B cell (primary cell): ENCODE measurements at regions of chr14 and their contacts with region 1.

Region 1: DNA sequence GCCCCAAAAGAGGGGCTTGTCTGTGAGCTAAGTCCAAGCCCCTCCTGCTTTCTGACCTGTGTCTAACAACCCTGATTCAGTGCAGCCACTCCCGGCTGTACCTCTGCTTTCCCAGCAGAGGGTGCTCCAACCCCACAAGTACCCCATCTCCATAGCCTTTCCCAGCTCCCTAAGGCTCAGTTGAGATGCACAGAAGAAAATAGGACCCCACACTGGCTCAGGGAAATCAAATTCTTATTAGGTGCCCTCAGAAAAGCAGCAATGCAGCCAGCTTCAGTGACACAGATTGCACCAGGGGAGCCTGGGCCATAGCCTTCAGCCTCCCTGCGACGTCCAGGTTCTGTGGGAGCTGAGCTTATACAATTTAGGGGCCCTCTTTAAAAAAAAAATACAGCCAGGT is 49.9 kb downstream of the LRRC74A start:
- DNase-seq: peak; percentile 68
- ATAC-seq: peak; percentile 55
- H3K4me3 ChIP-seq: no peak overlapping the region
- H3K4me3 Mint-ChIP-seq: no peak overlapping the region
- H3K27ac ChIP-seq: no peak overlapping the region
- H3K27ac Mint-ChIP-seq: no peak overlapping the region
- H3K4me1 ChIP-seq: no peaks in the 10 kb centered on the region
- H3K4me1 Mint-ChIP-seq: no peaks in the 10 kb centered on the region
- H3K27me3 ChIP-seq: peaks cover 0 to 3% (median 0%) of the 10 kb centered on the region in 4 experiments
- H3K27me3 Mint-ChIP-seq: peaks cover 4% of the 10 kb centered on the region
- CTCF ChIP-seq: peak; percentile 74

Region 2: DNA sequence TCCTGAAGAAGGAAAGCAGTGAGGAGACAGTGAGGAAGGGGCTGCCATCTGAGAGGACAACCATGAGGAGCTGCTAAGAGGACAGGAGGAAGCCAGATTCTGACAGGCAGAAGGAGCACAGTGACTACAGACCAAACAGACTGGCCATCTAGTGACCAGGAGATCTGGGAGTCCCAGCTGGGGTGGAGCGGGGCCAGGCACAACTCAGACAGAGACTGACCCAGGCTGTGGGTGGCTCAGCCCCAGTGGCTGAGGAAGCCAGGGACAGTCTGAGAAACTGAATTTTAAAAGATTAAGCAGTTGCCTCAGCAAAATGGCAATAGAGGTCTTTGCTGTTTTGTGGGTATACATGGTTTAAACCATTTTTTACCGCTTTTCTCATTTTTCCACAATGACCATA is 21.0 kb before region 1 on chr14:
- CTCF ChIA-PET with region 1: no interaction called
- POLR2A ChIA-PET with region 1: no interaction called
- intact Hi-C with region 1: no loop called
- DNase-seq: no peak
- ATAC-seq: no peak
- H3K4me3 ChIP-seq: no peak overlapping the region
- H3K4me3 Mint-ChIP-seq: no peak overlapping the region
- H3K27ac ChIP-seq: no peak overlapping the region
- H3K27ac Mint-ChIP-seq: no peak overlapping the region
- H3K4me1 ChIP-seq: no peaks in the 10 kb centered on the region
- H3K4me1 Mint-ChIP-seq: no peaks in the 10 kb centered on the region
- H3K27me3 ChIP-seq: peaks cover 0 to 4% (median 0%) of the 10 kb centered on the region in 4 experiments
- H3K27me3 Mint-ChIP-seq: peaks cover 26% of the 10 kb centered on the region
- CTCF ChIP-seq: no peak

Region 3: DNA sequence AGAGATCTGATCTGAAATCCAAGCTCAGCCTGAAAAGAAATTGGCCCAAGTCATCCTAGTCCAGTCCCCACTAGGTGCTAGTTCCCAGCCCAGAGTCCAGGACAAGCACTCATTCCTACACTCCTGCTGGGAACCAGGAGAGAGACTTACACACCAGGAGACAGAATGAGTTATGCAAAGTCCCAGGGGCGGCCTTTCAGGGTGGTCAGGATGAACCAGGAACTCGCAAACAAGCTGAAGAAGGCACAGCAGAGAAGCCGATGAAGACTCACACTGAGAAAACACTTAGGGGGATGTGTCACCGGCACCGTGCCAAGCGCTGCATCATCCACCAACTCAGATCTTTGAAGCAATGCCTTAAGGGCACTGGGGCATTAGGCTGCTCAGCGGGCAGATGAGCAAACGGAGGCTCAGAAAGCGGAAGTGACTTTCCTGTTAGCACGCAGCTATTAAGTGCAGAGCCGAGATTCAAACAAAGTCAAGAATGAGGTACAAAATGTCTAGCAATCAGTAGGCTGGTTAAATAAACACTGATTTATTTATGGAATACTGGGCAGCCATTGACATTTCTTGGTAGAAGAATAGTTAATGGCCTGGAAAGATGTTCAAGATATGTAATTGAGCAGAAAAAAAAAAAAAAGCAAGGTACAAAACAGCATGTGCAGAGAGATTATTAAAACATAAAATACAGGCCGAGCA is 28.8 kb after region 1 on chr14:
- CTCF ChIA-PET with region 1: interaction called, 153 read pairs
- POLR2A ChIA-PET with region 1: interaction called, 4 read pairs
- intact Hi-C with region 1: loop called (anchors 2 kb)
- DNase-seq: peak; percentile 91
- ATAC-seq: peak; percentile 83
- H3K4me3 ChIP-seq: peak overlapping the region in 1 of 5 experiments; percentile 36
- H3K4me3 Mint-ChIP-seq: peak overlapping the region; percentile 55
- H3K27ac ChIP-seq: peak overlapping the region; percentile 57 to 76
- H3K27ac Mint-ChIP-seq: peak overlapping the region; percentile 89
- H3K4me1 ChIP-seq: peaks cover 29 to 45% of the 10 kb centered on the region in 2 donors
- H3K4me1 Mint-ChIP-seq: peaks cover 34% of the 10 kb centered on the region
- H3K27me3 ChIP-seq: peaks cover 0 to 6% (median 0%) of the 10 kb centered on the region in 4 experiments
- H3K27me3 Mint-ChIP-seq: no peaks in the 10 kb centered on the region
- CTCF ChIP-seq: no peak

Region 4: DNA sequence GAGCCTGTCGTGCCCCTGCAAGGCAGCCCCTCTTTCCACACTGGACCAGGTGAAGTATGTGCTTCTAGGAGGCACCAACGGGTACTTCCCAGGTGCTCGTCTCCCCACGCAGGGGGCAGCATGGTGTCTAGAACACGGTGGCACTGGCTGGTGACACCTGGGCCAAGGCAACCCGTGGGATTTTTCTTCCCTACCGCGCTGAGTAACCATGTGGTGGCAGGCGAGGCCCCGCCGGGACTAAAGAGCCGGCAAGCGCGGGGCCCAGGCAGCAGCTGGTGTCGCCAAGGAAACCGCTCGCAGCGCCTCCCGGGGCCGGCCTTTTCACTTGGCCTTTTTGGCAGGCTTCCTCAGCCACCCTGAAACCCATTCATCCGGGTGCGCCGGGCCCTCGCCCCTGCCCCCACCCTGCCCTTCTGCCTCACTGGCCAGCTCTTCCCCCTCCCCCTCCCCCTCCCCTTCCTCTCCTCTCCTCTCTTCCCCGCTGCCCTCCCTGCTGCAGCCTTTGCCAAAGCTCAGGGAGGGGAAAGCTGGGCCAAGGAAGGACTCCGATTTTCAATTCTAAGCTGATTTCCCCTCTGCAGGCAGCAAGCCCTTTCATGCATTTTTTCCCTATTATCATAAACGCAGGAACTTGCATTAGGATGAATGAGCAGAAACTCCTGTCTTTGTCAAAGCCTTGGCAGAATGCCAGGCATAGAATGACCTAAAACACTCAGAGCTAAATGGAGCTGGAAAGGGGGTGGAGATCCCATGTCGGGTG is 71.2 kb after region 1 on chr14:
- CTCF ChIA-PET with region 1: interaction called, 6 read pairs
- POLR2A ChIA-PET with region 1: no interaction called
- intact Hi-C with region 1: loop called (anchors 2 kb)
- DNase-seq: peak; percentile 90
- ATAC-seq: peak; percentile 95
- H3K4me3 ChIP-seq: peak overlapping the region in 1 of 5 experiments; percentile 24
- H3K4me3 Mint-ChIP-seq: peak overlapping the region; percentile 64
- H3K27ac ChIP-seq: no peak overlapping the region
- H3K27ac Mint-ChIP-seq: peak overlapping the region; percentile 56
- H3K4me1 ChIP-seq: peaks cover 11 to 15% of the 10 kb centered on the region in 2 donors
- H3K4me1 Mint-ChIP-seq: peaks cover 17% of the 10 kb centered on the region
- H3K27me3 ChIP-seq: no peaks in the 10 kb centered on the region
- H3K27me3 Mint-ChIP-seq: no peaks in the 10 kb centered on the region
- CTCF ChIP-seq: peak; percentile 67

Region 5: DNA sequence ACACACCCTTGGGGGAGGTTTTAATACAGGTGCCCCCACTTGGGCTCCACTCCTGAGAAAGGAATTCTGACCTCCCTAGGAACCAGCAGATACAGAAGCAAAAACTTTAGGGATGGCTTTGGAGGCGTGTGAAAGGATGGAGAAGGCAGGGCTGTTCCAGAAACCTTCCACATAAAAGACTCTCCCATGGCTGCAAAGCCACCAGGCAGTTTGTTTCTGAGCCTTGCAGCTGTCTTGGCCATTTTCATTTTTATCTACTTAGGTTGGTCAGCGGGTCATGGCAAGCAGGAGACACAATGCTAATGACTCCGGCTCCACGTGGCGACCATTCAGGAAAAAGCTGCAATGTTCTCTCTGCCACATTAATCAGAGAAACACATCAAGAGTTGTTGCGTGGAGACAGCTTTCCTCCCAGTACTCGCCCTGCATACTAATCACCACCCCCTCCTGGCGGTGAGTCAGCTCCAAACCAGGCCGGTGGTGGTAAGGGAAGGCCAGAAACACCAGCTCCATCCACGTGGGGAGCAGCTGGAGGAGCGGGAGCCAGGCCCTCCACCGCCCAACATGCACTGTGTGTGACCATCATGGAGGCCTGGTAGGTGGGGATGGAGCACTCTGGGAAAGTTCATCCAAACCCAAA is 183.3 kb after region 1 on chr14:
- CTCF ChIA-PET with region 1: interaction called, 489 read pairs
- POLR2A ChIA-PET with region 1: interaction called, 4 read pairs
- intact Hi-C with region 1: no loop called
- DNase-seq: no peak
- ATAC-seq: no peak
- H3K4me3 ChIP-seq: no peak overlapping the region
- H3K4me3 Mint-ChIP-seq: no peak overlapping the region
- H3K27ac ChIP-seq: no peak overlapping the region
- H3K27ac Mint-ChIP-seq: no peak overlapping the region
- H3K4me1 ChIP-seq: peaks cover 4 to 7% of the 10 kb centered on the region in 2 donors
- H3K4me1 Mint-ChIP-seq: peaks cover 3% of the 10 kb centered on the region
- H3K27me3 ChIP-seq: no peaks in the 10 kb centered on the region
- H3K27me3 Mint-ChIP-seq: no peaks in the 10 kb centered on the region
- CTCF ChIP-seq: no peak

Region 6: DNA sequence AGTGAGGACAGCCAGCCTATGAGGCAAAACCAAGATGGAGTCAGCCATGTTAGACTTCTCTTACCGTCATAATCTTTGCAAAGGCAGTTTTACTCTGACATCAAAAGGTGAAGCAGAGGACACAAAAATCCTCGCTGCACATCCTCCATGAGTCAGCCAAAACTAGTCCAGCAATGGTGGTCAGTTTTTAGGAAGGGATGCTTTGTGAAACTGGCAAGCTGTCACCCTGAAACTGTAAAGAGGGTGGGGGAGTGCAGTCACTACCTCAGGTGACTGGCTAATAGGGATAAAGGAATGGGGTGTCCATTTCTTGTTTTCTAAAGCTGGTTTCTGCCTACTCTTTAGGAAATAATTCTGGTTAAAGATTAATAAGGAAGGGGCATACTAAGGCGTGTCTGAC is 216.6 kb after region 1 on chr14:
- CTCF ChIA-PET with region 1: interaction called, 42 read pairs
- POLR2A ChIA-PET with region 1: no interaction called
- intact Hi-C with region 1: loop called (anchors 1 kb)
- DNase-seq: no peak
- ATAC-seq: no peak
- H3K4me3 ChIP-seq: no peak overlapping the region
- H3K4me3 Mint-ChIP-seq: no peak overlapping the region
- H3K27ac ChIP-seq: no peak overlapping the region
- H3K27ac Mint-ChIP-seq: no peak overlapping the region
- H3K4me1 ChIP-seq: peaks cover 11 to 12% of the 10 kb centered on the region in 2 donors
- H3K4me1 Mint-ChIP-seq: peaks cover 20% of the 10 kb centered on the region
- H3K27me3 ChIP-seq: no peaks in the 10 kb centered on the region
- H3K27me3 Mint-ChIP-seq: peaks cover 5% of the 10 kb centered on the region
- CTCF ChIP-seq: no peak